IMR-90 (cell line): ENCODE measurements at regions of chr10 and their contacts with region 1.

Region 1: DNA sequence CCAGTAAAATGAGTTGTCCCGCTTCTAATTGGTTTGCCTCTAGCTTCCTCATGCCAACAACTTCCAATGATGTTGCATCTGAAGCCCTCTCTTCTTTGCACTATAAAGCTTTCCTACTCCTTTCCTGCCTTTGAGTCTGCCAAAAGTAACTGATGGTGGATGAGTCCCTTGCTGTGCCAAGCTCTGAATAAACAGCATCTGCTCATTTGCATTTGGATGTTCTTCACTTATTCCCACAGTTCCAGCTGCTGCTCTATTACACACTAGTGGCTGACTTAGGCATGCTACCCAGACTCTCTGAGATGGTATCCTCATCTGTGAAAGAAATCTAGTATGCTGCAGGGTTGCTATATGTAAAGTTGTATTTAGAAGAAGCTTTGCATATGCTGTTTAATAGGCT is 24.9 kb downstream of the SFR1 start:
- DNase-seq: no peak
- ATAC-seq: no peak
- H3K4me3 ChIP-seq: no peak overlapping the region
- H3K27ac ChIP-seq: no peak overlapping the region
- H3K4me1 ChIP-seq: no peaks in the 10 kb centered on the region
- H3K27me3 ChIP-seq: peaks cover 32% of the 10 kb centered on the region
- CTCF ChIP-seq: no peak
- POLR2A ChIP-seq: no peak
- RAD21 ChIP-seq: no peak

Region 2: GRCh38 chr10:104190695-104191094 is 43.8 kb after region 1 on chr10:
- CTCF ChIA-PET with region 1: no interaction called
- POLR2A ChIA-PET with region 1: no interaction called
- dilution Hi-C with region 1: no loop called
- in situ Hi-C with region 1: no loop called
- intact Hi-C with region 1: loop called (anchors 5 kb)
- DNase-seq: no peak
- ATAC-seq: no peak
- H3K4me3 ChIP-seq: no peak overlapping the region
- H3K27ac ChIP-seq: no peak overlapping the region
- H3K4me1 ChIP-seq: no peaks in the 10 kb centered on the region
- H3K27me3 ChIP-seq: peaks cover 37% of the 10 kb centered on the region
- CTCF ChIP-seq: no peak
- POLR2A ChIP-seq: no peak
- RAD21 ChIP-seq: no peak

Region 3: GRCh38 chr10:104218751-104219150 is 71.9 kb after region 1 on chr10:
- CTCF ChIA-PET with region 1: no interaction called
- POLR2A ChIA-PET with region 1: no interaction called
- dilution Hi-C with region 1: no loop called
- in situ Hi-C with region 1: no loop called
- intact Hi-C with region 1: no loop called
- DNase-seq: no peak
- ATAC-seq: no peak
- H3K4me3 ChIP-seq: no peak overlapping the region
- H3K27ac ChIP-seq: no peak overlapping the region
- H3K4me1 ChIP-seq: no peaks in the 10 kb centered on the region
- H3K27me3 ChIP-seq: peaks cover 44% of the 10 kb centered on the region
- CTCF ChIP-seq: no peak
- POLR2A ChIP-seq: no peak
- RAD21 ChIP-seq: no peak